Caco-2 (cell line): ENCODE measurements at regions of chr12 and their contacts with region 1.

Region 1: DNA sequence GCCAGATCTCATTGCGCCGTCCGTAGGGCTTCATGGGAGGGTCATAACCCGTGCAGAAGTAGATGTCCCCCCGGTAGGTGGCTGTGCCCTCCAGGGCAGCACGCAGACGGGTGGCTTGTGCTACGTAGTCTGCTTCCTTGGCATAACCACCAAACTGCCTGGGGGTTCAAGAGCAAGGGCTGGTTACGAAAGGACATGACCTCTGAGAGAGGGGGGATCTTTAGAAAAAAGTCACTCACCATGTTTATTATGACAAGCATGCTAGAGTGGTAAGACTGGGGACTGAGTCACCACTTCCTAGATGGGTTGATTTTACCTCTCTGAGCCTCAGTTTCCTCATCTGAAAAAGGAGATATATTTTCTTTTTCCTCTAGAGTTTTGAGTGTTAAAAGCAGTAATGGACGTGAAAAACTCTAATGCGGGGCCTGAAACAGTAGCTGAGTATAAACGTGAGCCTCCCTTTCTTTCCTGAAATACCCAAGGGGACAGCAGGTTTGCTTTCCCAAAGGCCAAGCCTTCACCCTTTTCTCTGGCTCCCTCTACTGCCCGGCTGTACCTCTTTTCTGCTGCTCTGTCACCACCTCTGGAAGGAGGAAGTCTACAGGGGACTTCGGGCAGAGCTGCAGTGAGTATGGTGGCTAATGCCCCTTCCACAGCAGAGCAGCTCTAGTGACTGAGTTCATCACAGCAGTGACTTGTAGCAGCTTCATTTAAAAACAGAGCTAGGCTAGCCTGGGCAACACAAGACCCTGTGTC is 23.5 kb upstream of the GPRC5D start:
- DNase-seq: peak; percentile 70 to 74
- H3K4me3 ChIP-seq: no peak overlapping the region
- H3K4me3 Mint-ChIP-seq: no peak overlapping the region
- H3K27ac Mint-ChIP-seq: no peak overlapping the region
- H3K4me1 ChIP-seq: peaks cover 21% of the 10 kb centered on the region
- H3K4me1 Mint-ChIP-seq: peaks cover 6% of the 10 kb centered on the region
- H3K27me3 ChIP-seq: no peaks in the 10 kb centered on the region
- H3K27me3 Mint-ChIP-seq: no peaks in the 10 kb centered on the region
- CTCF ChIP-seq: peak; percentile 46 to 78

Region 2: DNA sequence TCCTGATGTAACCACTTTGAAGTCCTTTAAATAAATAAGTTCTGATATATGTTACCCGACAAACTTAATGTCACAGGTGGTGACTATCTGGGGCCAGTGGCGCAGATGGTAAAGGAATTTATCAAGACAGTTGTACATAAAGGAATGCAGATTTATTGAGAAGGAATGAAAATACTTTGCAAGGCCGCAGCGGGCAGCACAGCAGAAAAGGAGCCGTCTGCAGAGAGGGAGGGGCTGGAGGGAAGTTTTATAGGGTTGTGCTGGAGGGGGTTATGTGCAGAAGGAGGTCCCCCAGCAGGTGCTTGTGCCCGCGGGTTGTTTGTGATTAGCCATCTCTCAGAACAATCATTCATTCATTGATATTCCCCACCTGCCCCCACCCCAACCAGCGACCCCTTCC is 40.9 kb before region 1 on chr12:
- CTCF ChIA-PET with region 1: no interaction called
- POLR2A ChIA-PET with region 1: no interaction called
- intact Hi-C with region 1: loop called (anchors 5 kb)
- DNase-seq: peak; percentile 60 to 74
- H3K4me3 ChIP-seq: no peak overlapping the region
- H3K4me3 Mint-ChIP-seq: peak overlapping the region; percentile 34
- H3K27ac Mint-ChIP-seq: peak overlapping the region; percentile 79
- H3K4me1 ChIP-seq: peaks cover 18% of the 10 kb centered on the region
- H3K4me1 Mint-ChIP-seq: peaks cover 17% of the 10 kb centered on the region
- H3K27me3 ChIP-seq: no peaks in the 10 kb centered on the region
- H3K27me3 Mint-ChIP-seq: no peaks in the 10 kb centered on the region
- CTCF ChIP-seq: no peak

Region 3: DNA sequence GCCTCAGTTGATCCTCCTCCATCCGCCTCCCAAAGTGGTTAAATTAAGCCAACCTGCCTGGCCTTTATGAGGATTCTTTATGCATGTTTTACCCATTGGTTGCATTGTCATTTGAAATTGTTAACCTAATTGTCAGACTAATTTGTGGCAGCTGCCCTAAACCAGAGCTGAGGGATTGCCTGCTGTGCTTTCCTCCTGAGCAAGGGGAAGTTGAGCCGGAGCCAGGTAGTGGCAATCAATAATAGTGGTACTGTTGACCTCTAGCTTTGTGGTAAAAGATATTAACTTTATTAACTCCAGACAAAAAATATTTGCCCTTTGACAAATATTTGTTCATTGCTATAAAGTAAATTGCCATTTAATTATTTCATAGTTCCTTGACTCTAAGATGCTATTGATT is 30.1 kb after region 1 on chr12:
- CTCF ChIA-PET with region 1: no interaction called
- POLR2A ChIA-PET with region 1: no interaction called
- intact Hi-C with region 1: no loop called
- DNase-seq: no peak
- H3K4me3 ChIP-seq: no peak overlapping the region
- H3K4me3 Mint-ChIP-seq: no peak overlapping the region
- H3K27ac Mint-ChIP-seq: no peak overlapping the region
- H3K4me1 ChIP-seq: peaks cover 5% of the 10 kb centered on the region; the same call in 1 of the 2 replicates
- H3K4me1 Mint-ChIP-seq: no peaks in the 10 kb centered on the region
- H3K27me3 ChIP-seq: no peaks in the 10 kb centered on the region
- H3K27me3 Mint-ChIP-seq: no peaks in the 10 kb centered on the region
- CTCF ChIP-seq: no peak

Region 4: GRCh38 chr12:13044002-13044905 is 68.8 kb after region 1 on chr12 and contains the start of gene FAM234B:
- CTCF ChIA-PET with region 1: no interaction called
- POLR2A ChIA-PET with region 1: no interaction called
- intact Hi-C with region 1: no loop called
- DNase-seq: peak; percentile 82 to 89
- H3K4me3 ChIP-seq: peak within 1 kb of the TSS; percentile 96
- H3K4me3 Mint-ChIP-seq: peak within 1 kb of the TSS; percentile 77
- H3K27ac Mint-ChIP-seq: no peak within 1 kb of the TSS
- H3K4me1 ChIP-seq: peaks cover 13% of the 10 kb centered on the region
- H3K4me1 Mint-ChIP-seq: peaks cover 4% of the 10 kb centered on the region
- H3K27me3 ChIP-seq: no peaks in the 10 kb centered on the region
- H3K27me3 Mint-ChIP-seq: no peaks in the 10 kb centered on the region
- CTCF ChIP-seq: peak; percentile 55 to 62
- total RNA-seq, gene FAM234B: 11.2 and 11.4 TPM in 2 replicates

Region 5: DNA sequence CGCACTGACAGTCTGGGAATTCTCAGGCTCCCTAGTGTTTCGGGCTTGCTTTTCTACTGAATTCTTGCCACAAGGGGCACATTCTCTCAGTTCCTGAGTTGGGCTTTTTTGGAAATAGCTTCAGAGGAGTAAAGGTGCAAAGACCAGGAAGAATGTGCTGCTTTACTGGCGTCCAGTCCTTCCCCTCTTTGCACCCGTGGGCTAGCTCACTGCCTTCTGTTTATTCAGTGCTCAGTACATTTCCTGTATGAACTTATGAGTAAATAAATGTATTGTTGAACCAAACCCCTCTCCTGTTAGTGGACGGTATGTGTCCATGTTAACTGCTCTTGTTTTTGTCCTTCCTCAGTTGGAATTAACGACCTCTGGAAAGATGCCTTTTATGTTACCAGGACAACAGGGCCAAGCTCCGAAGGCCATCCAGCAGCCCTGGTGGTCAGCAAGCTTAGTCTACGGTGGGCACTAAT is 104.0 kb after region 1 on chr12:
- CTCF ChIA-PET with region 1: no interaction called
- POLR2A ChIA-PET with region 1: no interaction called
- intact Hi-C with region 1: no loop called
- DNase-seq: peak in 1 of 2 experiments; percentile 23
- H3K4me3 ChIP-seq: no peak overlapping the region
- H3K4me3 Mint-ChIP-seq: no peak overlapping the region
- H3K27ac Mint-ChIP-seq: no peak overlapping the region
- H3K4me1 ChIP-seq: peaks cover 4% of the 10 kb centered on the region; the same call in 1 of the 2 replicates
- H3K4me1 Mint-ChIP-seq: peaks cover 12% of the 10 kb centered on the region
- H3K27me3 ChIP-seq: no peaks in the 10 kb centered on the region
- H3K27me3 Mint-ChIP-seq: no peaks in the 10 kb centered on the region
- CTCF ChIP-seq: peak; percentile 29 to 40

Region 6: GRCh38 chr12:13114251-13115052 is 139.0 kb after region 1 on chr12:
- CTCF ChIA-PET with region 1: no interaction called
- POLR2A ChIA-PET with region 1: no interaction called
- intact Hi-C with region 1: no loop called
- DNase-seq: no peak
- H3K4me3 ChIP-seq: no peak overlapping the region
- H3K4me3 Mint-ChIP-seq: no peak overlapping the region
- H3K27ac Mint-ChIP-seq: no peak overlapping the region
- H3K4me1 ChIP-seq: no peaks in the 10 kb centered on the region; the same call in 1 of the 2 replicates
- H3K4me1 Mint-ChIP-seq: peaks cover 13% of the 10 kb centered on the region
- H3K27me3 ChIP-seq: no peaks in the 10 kb centered on the region
- H3K27me3 Mint-ChIP-seq: no peaks in the 10 kb centered on the region
- CTCF ChIP-seq: no peak